CD4-positive, alpha-beta T cell (primary cell): ENCODE measurements at regions of chr11 and their contacts with region 1.

Region 1: DNA sequence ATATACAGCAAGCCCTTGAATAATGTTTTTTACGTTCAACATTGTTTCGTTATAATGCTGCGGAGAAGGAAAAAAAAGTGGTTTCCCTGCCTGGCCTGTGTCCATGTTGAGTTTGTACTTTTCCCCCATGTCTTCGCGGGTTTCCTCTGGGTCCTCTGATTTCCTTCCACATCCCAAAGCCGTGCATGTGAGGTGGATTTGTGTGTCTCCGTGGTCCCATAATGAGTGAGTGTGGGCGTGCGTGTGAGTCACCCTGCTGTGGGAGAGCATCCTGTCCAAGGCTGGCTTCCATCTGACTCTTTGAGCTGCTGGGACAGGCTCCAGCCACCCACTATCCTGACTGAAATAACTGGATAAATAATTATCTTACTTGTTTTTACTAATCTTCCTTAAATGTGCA is 29.6 kb upstream of the SNX19 start:
- DNase-seq: no peak
- ATAC-seq: no peak
- H3K4me3 ChIP-seq: no peak overlapping the region
- H3K4me3 Mint-ChIP-seq: no peak overlapping the region
- H3K27ac ChIP-seq: no peak overlapping the region
- H3K27ac Mint-ChIP-seq: no peak overlapping the region
- H3K4me1 ChIP-seq: no peaks in the 10 kb centered on the region
- H3K4me1 Mint-ChIP-seq: peaks cover 12% of the 10 kb centered on the region
- H3K27me3 ChIP-seq: no peaks in the 10 kb centered on the region
- H3K27me3 Mint-ChIP-seq: peaks cover 28% of the 10 kb centered on the region
- CTCF ChIP-seq: no peak

Region 2: DNA sequence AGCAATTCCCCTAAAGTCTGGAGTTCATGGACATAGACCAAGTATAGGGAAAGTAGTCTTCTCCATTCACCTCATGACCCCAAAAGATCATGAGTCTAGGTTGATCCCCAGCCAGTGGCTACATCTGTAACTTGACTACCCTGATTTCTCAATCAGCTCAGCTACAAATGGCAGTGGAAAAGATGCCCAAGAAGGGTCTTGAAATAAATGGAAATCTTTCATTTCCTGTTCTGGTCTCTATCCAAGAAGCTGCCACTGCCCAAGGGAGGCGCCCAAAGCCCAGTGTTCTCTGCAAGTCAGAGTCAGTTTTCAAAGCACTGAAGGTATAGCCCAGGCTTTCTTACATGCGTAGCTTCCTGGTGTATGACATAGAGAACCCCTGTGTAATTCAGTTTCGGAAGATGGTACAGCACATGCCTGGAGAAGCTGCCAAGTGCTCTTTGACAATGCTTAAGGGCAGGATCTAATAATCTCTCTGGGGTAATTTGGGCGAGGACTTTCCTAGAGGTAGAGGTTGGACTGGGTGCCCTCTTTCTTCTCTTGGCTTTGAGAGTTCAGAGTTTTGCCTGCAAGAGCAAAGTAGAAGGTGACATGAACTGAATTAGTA is 396.4 kb before region 1 on chr11:
- CTCF ChIA-PET with region 1: no interaction called
- POLR2A ChIA-PET with region 1: no interaction called
- intact Hi-C with region 1: no loop called
- DNase-seq: no peak
- ATAC-seq: no peak
- H3K4me3 ChIP-seq: no peak overlapping the region
- H3K4me3 Mint-ChIP-seq: no peak overlapping the region
- H3K27ac ChIP-seq: no peak overlapping the region
- H3K27ac Mint-ChIP-seq: no peak overlapping the region
- H3K4me1 ChIP-seq: no peaks in the 10 kb centered on the region
- H3K4me1 Mint-ChIP-seq: no peaks in the 10 kb centered on the region
- H3K27me3 ChIP-seq: peaks cover 0 to 7% of the 10 kb centered on the region in 2 experiments
- H3K27me3 Mint-ChIP-seq: peaks cover 16% of the 10 kb centered on the region
- CTCF ChIP-seq: no peak

Region 3: DNA sequence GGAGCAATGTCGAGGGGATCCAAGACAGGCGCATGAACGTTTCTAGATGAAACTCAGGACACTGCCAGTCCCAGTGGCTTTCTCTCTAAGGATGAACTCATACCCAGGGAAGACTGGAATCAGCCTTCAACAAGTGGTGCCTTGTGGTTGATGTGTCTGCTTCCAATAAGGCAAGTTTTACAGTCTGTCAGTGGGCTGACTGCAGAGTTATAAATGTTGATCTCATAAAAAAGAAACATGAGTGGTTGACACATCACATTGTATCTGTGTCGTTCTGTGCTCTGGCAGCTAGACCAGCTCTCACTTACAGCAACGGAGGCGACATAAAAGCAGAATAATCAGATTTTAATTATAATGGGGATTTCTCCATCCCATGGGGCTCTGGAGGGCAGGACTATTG is 126.3 kb before region 1 on chr11:
- CTCF ChIA-PET with region 1: no interaction called
- POLR2A ChIA-PET with region 1: no interaction called
- intact Hi-C with region 1: loop called in 1 of 2 experiments (anchors 5 kb)
- DNase-seq: no peak
- ATAC-seq: no peak
- H3K4me3 ChIP-seq: no peak overlapping the region
- H3K4me3 Mint-ChIP-seq: no peak overlapping the region
- H3K27ac ChIP-seq: no peak overlapping the region
- H3K27ac Mint-ChIP-seq: no peak overlapping the region
- H3K4me1 ChIP-seq: no peaks in the 10 kb centered on the region
- H3K4me1 Mint-ChIP-seq: no peaks in the 10 kb centered on the region
- H3K27me3 ChIP-seq: no peaks in the 10 kb centered on the region
- H3K27me3 Mint-ChIP-seq: peaks cover 26% of the 10 kb centered on the region
- CTCF ChIP-seq: no peak

Region 4: GRCh38 chr11:132080127-132080526 is 1134.2 kb after region 1 on chr11:
- CTCF ChIA-PET with region 1: no interaction called
- POLR2A ChIA-PET with region 1: no interaction called
- intact Hi-C with region 1: no loop called
- DNase-seq: no peak
- ATAC-seq: no peak
- H3K4me3 ChIP-seq: no peak overlapping the region
- H3K4me3 Mint-ChIP-seq: no peak overlapping the region
- H3K27ac ChIP-seq: no peak overlapping the region
- H3K27ac Mint-ChIP-seq: no peak overlapping the region
- H3K4me1 ChIP-seq: no peaks in the 10 kb centered on the region
- H3K4me1 Mint-ChIP-seq: no peaks in the 10 kb centered on the region
- H3K27me3 ChIP-seq: no peaks in the 10 kb centered on the region
- H3K27me3 Mint-ChIP-seq: no peaks in the 10 kb centered on the region
- CTCF ChIP-seq: no peak